ENCODE measurements at regions of chrX and their contacts with region 1.

Region 1: GRCh38 chrX:75067931-75068330 is 88.2 kb downstream of the ABCB7 start:
- DNase-seq: no peak
- H3K4me3 ChIP-seq: no peak overlapping the region
- H3K27ac ChIP-seq: no peak overlapping the region
- H3K4me1 ChIP-seq: no peaks in the 10 kb centered on the region
- H3K27me3 ChIP-seq: no peaks in the 10 kb centered on the region
- CTCF ChIP-seq: no peak
- EP300 ChIP-seq: no peak
- POLR2A ChIP-seq: no peak

Region 2: GRCh38 chrX:75989806-75990590 is 922.1 kb after region 1 on chrX:
- intact Hi-C with region 1: loop called in 1 of 4 experiments (anchors 5 kb)
- DNase-seq: no peak
- H3K4me3 ChIP-seq: no peak overlapping the region
- H3K27ac ChIP-seq: no peak overlapping the region
- H3K4me1 ChIP-seq: no peaks in the 10 kb centered on the region
- H3K27me3 ChIP-seq: no peaks in the 10 kb centered on the region
- CTCF ChIP-seq: no peak
- EP300 ChIP-seq: no peak
- POLR2A ChIP-seq: no peak

Measured in ovary (tissue), 10 donors.